ENCODE measurements at regions of chr6 and their contacts with region 1.

Region 1: GRCh38 chr6:137571854-137572253 is 77.7 kb upstream of the OLIG3 start:
- DNase-seq: peak; percentile 51 to 64 (median 56)
- H3K4me3 ChIP-seq: no peak overlapping the region
- H3K4me3 Mint-ChIP-seq: no peak overlapping the region
- H3K27ac ChIP-seq: no peak overlapping the region
- H3K27ac Mint-ChIP-seq: no peak overlapping the region
- H3K4me1 ChIP-seq: no peaks in the 10 kb centered on the region
- H3K4me1 Mint-ChIP-seq: peaks cover 0 to 13% (median 6%) of the 10 kb centered on the region in 4 donors
- H3K27me3 ChIP-seq: no peaks in the 10 kb centered on the region
- H3K27me3 Mint-ChIP-seq: peaks cover 3 to 12% of the 10 kb centered on the region in 2 donors

Region 2: GRCh38 chr6:137518386-137518983 is 53.4 kb before region 1 on chr6:
- CTCF ChIA-PET with region 1: interaction called, 10 read pairs
- POLR2A ChIA-PET with region 1: no interaction called
- intact Hi-C with region 1: no loop called
- DNase-seq: no peak
- H3K4me3 ChIP-seq: no peak overlapping the region
- H3K4me3 Mint-ChIP-seq: no peak overlapping the region
- H3K27ac ChIP-seq: no peak overlapping the region
- H3K27ac Mint-ChIP-seq: no peak overlapping the region
- H3K4me1 ChIP-seq: no peaks in the 10 kb centered on the region
- H3K4me1 Mint-ChIP-seq: peaks cover 2 to 7% (median 3%) of the 10 kb centered on the region in 4 donors
- H3K27me3 ChIP-seq: peaks cover 26% of the 10 kb centered on the region
- H3K27me3 Mint-ChIP-seq: peaks cover 41 to 62% of the 10 kb centered on the region in 2 donors

Region 3: DNA sequence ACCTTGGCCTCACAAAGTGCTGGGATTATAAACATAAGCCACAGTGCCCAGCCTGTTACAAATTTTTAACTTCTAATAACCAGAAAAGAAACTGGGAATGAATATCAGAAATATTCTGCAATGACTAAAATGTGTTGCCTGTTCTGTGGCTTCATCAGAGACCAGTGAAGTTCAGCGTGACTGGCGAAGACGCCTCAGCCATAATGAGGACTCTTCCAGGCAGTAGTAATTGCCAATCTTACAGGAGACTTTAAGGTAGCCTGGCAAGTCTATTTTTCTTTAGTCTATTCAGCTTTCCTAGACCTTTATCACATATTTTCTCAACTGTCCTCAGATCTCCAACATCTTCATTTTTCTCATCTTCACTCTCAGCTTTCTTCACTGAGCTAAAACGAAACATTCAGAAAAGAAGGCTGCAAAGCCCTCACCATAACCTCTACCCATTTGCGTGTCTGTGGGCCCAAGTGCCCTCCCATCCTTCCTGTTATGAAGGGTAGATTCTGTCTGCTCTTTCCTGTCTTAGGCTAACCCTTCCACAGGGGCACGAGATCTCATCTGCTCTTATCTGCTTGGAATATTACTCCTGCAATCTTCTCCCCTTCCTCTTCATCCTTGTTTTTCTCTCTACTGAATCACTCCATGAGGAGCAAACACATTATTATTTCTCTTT is 35.6 kb before region 1 on chr6:
- CTCF ChIA-PET with region 1: interaction called, 4 read pairs
- POLR2A ChIA-PET with region 1: no interaction called
- intact Hi-C with region 1: loop called (anchors 5 kb)
- DNase-seq: peak in 4 of 5 donors; percentile 14 to 63 (median 52)
- H3K4me3 ChIP-seq: no peak overlapping the region
- H3K4me3 Mint-ChIP-seq: no peak overlapping the region
- H3K27ac ChIP-seq: no peak overlapping the region
- H3K27ac Mint-ChIP-seq: no peak overlapping the region
- H3K4me1 ChIP-seq: peaks cover 30% of the 10 kb centered on the region
- H3K4me1 Mint-ChIP-seq: peaks cover 0 to 7% (median 0%) of the 10 kb centered on the region in 4 donors
- H3K27me3 ChIP-seq: no peaks in the 10 kb centered on the region
- H3K27me3 Mint-ChIP-seq: peaks cover 2 to 3% of the 10 kb centered on the region in 2 donors

Region 4: GRCh38 chr6:137560184-137560563 is 11.7 kb before region 1 on chr6:
- CTCF ChIA-PET with region 1: interaction called, 18 read pairs
- POLR2A ChIA-PET with region 1: interaction called, 8 read pairs
- intact Hi-C with region 1: no loop called
- DNase-seq: no peak
- H3K4me3 ChIP-seq: peak overlapping the region in 1 of 2 donors; percentile 10
- H3K4me3 Mint-ChIP-seq: peak overlapping the region in 7 of 8 donors; percentile 70 to 89 (median 78)
- H3K27ac ChIP-seq: no peak overlapping the region
- H3K27ac Mint-ChIP-seq: peak overlapping the region in 6 of 7 donors; percentile 79 to 93 (median 88)
- H3K4me1 ChIP-seq: peaks cover 36% of the 10 kb centered on the region
- H3K4me1 Mint-ChIP-seq: peaks cover 31 to 67% (median 47%) of the 10 kb centered on the region in 4 donors
- H3K27me3 ChIP-seq: no peaks in the 10 kb centered on the region
- H3K27me3 Mint-ChIP-seq: peaks cover 0 to 2% of the 10 kb centered on the region in 2 donors

Region 5: DNA sequence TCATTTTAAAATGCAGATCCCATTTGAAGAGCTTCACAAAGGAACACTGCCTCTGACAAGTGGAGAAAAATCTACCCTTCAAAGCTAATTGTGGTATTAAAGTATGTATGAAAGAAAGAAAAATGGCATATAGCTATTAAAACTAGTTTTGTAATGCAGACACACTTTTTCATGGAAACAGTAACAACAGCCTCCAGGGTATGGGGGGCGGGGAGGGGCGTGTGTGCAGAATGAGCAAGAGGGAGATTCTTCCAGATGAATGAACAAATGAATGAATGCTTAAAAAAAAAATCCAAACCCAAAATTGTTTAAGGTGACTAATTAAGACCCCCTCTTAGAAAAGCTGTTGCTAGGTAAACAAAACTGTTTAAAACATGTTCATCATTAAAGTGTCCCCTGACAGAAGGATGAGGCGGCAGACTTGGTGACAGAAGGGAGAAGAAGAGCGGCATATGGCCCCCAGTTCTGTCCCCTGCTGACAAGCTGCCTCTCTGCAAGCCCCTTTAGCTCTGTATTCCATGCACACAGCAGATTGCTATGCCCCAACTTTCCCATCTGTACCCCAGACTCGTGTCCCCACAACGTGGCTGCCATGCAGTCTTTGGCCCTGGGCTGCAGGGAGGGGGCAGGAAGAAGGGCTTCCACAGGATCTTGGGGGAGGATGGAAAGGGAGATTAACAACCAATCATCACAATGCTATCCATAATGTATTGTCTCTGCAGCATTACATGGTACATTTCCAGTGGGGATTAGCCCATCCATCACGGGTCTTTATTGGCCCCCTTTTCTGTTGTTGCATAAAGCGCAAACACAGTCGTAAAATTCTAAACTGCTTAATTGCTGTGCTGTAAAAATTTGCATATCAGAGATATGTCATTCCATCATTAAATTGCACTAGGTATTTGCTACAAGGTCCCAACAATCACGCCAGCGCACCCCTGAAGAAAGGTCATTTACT is 30.7 kb after region 1 on chr6:
- CTCF ChIA-PET with region 1: no interaction called
- POLR2A ChIA-PET with region 1: no interaction called
- intact Hi-C with region 1: no loop called
- DNase-seq: no peak
- H3K4me3 ChIP-seq: no peak overlapping the region
- H3K4me3 Mint-ChIP-seq: peak overlapping the region in 1 of 8 donors; percentile 22
- H3K27ac ChIP-seq: no peak overlapping the region
- H3K27ac Mint-ChIP-seq: no peak overlapping the region
- H3K4me1 ChIP-seq: no peaks in the 10 kb centered on the region
- H3K4me1 Mint-ChIP-seq: no peaks in the 10 kb centered on the region
- H3K27me3 ChIP-seq: no peaks in the 10 kb centered on the region
- H3K27me3 Mint-ChIP-seq: peaks cover 24 to 28% of the 10 kb centered on the region in 2 donors

Region 6: GRCh38 chr6:137722749-137723272 is 151.0 kb after region 1 on chr6:
- CTCF ChIA-PET with region 1: no interaction called
- POLR2A ChIA-PET with region 1: no interaction called
- intact Hi-C with region 1: no loop called
- DNase-seq: peak in 1 of 5 donors; percentile 10
- H3K4me3 ChIP-seq: no peak overlapping the region
- H3K4me3 Mint-ChIP-seq: no peak overlapping the region
- H3K27ac ChIP-seq: no peak overlapping the region
- H3K27ac Mint-ChIP-seq: peak overlapping the region; percentile 4 to 85 (median 67)
- H3K4me1 ChIP-seq: peaks cover 16% of the 10 kb centered on the region
- H3K4me1 Mint-ChIP-seq: peaks cover 10 to 22% (median 14%) of the 10 kb centered on the region in 4 donors
- H3K27me3 ChIP-seq: no peaks in the 10 kb centered on the region
- H3K27me3 Mint-ChIP-seq: no peaks in the 10 kb centered on the region

Measured in CD4-positive, alpha-beta memory T cell (primary cell).